ENCODE measurements at regions of chr6 and their contacts with region 1.

Region 1: GRCh38 chr6:32868257-32868788 is 14.3 kb downstream of the PSMB9 start:
- DNase-seq: peak; percentile 83
- H3K4me3 ChIP-seq: no peak overlapping the region
- H3K27ac ChIP-seq: no peak overlapping the region
- H3K4me1 ChIP-seq: no peaks in the 10 kb centered on the region
- H3K27me3 ChIP-seq: peaks cover 33 to 58% of the 10 kb centered on the region in 2 experiments
- CTCF ChIP-seq: peak; percentile 69 to 72
- POLR2A ChIP-seq: no peak

Region 2: DNA sequence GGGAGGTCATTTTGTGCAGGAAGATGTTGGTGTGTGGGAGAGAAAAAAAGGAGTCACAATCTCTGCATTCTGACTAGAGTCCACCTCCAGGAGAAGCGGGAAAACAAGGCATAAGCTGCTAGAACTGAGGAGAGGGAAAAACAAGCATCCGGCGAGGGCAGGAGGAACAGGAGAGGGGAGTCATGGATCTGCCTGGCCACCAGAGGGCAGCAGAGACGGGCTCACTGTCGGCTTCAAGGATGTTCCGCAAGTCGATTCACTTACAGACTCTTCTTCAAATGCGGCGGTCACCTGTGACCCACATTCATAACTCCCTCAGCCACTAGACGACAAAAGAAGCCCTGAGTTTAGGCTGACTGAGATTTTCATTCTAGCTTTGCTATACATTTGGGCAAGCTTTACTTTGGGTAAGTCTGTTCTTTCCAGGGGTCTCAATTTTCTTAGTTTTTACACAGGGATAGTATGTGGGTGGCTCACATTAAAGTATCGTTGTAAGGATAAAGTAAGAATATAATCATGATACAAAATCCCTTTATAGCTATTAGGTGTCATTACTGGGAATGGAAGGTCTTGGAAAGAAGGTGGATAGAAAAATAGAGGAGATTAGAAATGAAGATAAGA is 454.8 kb before region 1 on chr6:
- CTCF ChIA-PET with region 1: interaction called, 51 read pairs
- POLR2A ChIA-PET with region 1: no interaction called
- dilution Hi-C with region 1: no loop called
- intact Hi-C with region 1: loop called (anchors 2 kb)
- DNase-seq: peak; percentile 84
- H3K4me3 ChIP-seq: no peak overlapping the region
- H3K27ac ChIP-seq: no peak overlapping the region
- H3K4me1 ChIP-seq: peaks cover 8% of the 10 kb centered on the region
- H3K27me3 ChIP-seq: peaks cover 15 to 26% of the 10 kb centered on the region in 2 experiments
- CTCF ChIP-seq: peak; percentile 79 to 94
- POLR2A ChIP-seq: no peak

Region 3: DNA sequence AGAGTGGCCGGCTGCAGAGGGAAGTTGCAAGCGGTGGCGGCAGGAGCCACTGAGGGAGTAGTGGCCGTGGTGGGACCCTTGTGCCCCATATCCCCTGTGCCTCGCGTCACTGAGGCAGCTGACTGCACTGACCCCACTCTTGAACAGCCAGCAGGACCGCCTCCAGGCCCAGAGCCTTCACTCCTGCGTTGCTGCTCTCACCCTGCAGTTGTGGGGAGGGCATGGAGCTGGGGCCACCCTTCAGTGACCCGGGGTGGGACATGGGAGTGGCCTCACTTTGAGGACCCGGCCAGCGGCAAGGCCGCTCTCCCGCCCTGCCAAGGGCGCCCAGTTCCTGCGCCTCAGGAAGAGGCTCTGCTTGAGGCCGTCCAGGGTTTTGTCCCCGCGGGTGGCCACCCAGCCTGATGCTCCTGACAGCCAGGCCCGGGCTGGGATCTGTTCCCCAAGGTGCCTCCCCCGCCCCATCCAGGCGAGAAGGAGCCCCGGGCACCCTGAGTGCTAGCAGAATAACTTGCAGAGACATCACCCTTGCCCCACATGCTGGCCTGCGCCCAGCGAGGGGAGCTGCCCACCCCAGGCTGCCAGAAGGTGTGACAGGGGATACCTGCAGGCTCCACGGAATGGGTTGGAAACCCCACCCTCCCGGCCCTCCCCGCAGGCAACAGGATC is 384.2 kb before region 1 on chr6:
- CTCF ChIA-PET with region 1: no interaction called
- POLR2A ChIA-PET with region 1: no interaction called
- dilution Hi-C with region 1: no loop called
- intact Hi-C with region 1: no loop called
- DNase-seq: peak; percentile 1
- H3K4me3 ChIP-seq: no peak overlapping the region
- H3K27ac ChIP-seq: no peak overlapping the region
- H3K4me1 ChIP-seq: no peaks in the 10 kb centered on the region
- H3K27me3 ChIP-seq: peaks cover 3 to 4% of the 10 kb centered on the region in 2 experiments
- CTCF ChIP-seq: no peak
- POLR2A ChIP-seq: no peak

Region 4: GRCh38 chr6:32658268-32658897 is 209.9 kb before region 1 on chr6:
- CTCF ChIA-PET with region 1: no interaction called
- POLR2A ChIA-PET with region 1: no interaction called
- dilution Hi-C with region 1: no loop called
- intact Hi-C with region 1: no loop called
- DNase-seq: no peak
- H3K4me3 ChIP-seq: no peak overlapping the region
- H3K27ac ChIP-seq: no peak overlapping the region
- H3K4me1 ChIP-seq: no peaks in the 10 kb centered on the region
- H3K27me3 ChIP-seq: no peaks in the 10 kb centered on the region
- CTCF ChIP-seq: no peak
- POLR2A ChIP-seq: no peak

Region 5: DNA sequence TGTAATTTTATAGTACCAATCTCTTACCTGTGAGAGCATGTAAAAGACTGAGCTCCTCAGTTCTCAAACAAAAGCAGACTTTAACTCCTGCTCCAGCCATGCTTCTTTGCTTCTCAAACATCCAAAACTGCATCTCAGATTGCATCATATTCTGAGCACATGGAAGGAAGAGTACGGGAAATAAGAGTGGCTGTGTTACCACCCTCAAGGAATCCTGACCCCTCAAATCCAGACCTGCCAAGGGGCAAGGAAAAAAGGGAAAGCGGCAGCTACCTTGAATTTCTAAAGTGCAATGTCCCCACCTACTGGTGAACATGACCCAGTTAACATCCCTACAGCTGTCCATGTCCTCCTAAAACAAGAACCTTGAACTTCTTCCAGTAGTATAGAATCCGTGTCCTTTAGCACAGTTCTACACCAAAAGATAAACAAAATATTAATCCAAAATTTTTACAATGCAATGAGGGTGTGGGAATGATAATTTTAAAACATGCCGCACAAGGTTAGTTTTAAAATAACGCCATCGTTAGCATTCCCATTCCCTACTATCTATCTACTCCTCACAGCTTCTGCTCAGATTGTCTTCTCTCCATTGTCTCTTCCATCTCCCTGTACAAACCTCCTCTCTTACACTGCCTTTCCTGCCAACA is 167.8 kb before region 1 on chr6:
- CTCF ChIA-PET with region 1: interaction called, 28 read pairs
- POLR2A ChIA-PET with region 1: no interaction called
- dilution Hi-C with region 1: no loop called
- intact Hi-C with region 1: loop called (anchors 10 kb)
- DNase-seq: peak; percentile 67
- H3K4me3 ChIP-seq: no peak overlapping the region
- H3K27ac ChIP-seq: no peak overlapping the region
- H3K4me1 ChIP-seq: peaks cover 6% of the 10 kb centered on the region
- H3K27me3 ChIP-seq: peaks cover 15 to 40% of the 10 kb centered on the region in 2 experiments
- CTCF ChIP-seq: peak; percentile 41 to 64
- POLR2A ChIP-seq: no peak

Region 6: DNA sequence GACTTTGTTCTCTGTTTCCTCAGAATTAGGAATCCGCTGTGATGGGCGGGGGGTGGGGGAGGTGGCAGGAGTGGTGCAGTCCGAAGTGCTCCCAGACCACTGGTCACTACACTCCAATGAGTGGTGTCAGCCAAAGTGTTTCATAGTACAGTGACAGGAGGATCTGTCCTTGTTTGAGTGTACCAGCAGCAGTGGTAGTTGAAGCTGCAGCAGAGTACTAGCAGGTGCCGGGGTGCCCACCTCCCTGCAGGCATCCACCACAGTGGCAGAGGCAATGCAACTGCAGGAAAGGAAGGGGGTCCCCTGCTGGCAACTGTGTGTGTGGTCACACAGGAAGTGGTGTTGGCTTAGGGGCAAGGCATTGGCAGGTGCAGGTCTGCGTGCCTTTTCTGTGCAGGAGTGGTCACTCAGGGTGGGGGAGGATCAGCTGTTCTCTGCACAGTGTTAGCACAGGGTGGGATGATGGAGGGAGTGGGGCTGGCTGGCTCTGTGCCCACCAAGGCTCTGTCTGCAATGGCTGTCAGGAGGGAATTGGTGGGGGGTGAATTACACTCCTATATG is 61.2 kb before region 1 on chr6:
- CTCF ChIA-PET with region 1: interaction called, 63 read pairs
- POLR2A ChIA-PET with region 1: no interaction called
- dilution Hi-C with region 1: no loop called
- intact Hi-C with region 1: no loop called
- DNase-seq: no peak
- H3K4me3 ChIP-seq: no peak overlapping the region
- H3K27ac ChIP-seq: no peak overlapping the region
- H3K4me1 ChIP-seq: no peaks in the 10 kb centered on the region
- H3K27me3 ChIP-seq: peaks cover 13 to 35% of the 10 kb centered on the region in 2 experiments
- CTCF ChIP-seq: no peak
- POLR2A ChIP-seq: no peak

Region 7: DNA sequence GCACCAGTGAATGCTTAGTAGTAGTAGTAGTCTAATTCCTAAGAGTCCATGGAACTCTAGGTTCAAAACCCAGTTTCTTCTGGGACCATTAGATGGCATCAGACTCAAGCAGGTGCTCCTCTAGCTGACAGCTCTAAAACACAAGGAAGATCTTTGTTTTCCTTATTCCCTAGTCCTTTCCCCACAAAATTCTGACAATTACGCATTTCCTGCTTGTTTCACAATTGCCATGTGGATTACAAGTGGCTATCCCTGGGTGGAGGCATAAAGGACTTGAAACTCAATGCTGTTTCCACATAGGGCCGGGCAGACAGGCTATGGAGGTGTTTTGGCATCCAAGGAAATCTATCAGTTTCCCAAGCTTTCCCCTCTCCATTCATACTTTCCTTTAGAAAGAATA is 42.4 kb before region 1 on chr6:
- CTCF ChIA-PET with region 1: interaction called, 188 read pairs
- POLR2A ChIA-PET with region 1: no interaction called
- dilution Hi-C with region 1: no loop called
- intact Hi-C with region 1: loop called (anchors 1 kb)
- DNase-seq: peak; percentile 48
- H3K4me3 ChIP-seq: no peak overlapping the region
- H3K27ac ChIP-seq: no peak overlapping the region
- H3K4me1 ChIP-seq: no peaks in the 10 kb centered on the region
- H3K27me3 ChIP-seq: no peaks in the 10 kb centered on the region
- CTCF ChIP-seq: peak; percentile 13 to 20
- POLR2A ChIP-seq: no peak

Region 8: DNA sequence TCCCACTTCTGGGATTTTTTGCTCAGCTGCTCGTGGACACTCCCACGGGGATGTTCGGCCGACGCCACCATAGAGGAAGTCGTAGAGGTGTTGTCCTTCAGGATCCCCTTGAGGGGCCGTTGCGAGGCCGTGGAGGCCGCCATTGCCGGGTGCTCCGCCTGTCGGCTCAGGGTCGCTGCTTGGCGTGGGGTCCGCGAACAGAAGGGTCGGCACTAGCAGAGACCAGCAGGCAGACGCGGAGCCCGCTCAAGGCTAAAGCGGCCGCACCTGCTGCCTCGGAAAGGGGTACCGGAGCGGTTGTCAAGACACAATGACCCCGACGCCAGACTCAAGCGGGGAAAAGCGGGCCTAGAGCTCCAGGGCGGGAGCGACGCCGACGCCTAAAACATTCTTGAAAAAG is 11.4 kb after region 1 on chr6:
- CTCF ChIA-PET with region 1: interaction called, 40 read pairs
- POLR2A ChIA-PET with region 1: no interaction called
- dilution Hi-C with region 1: no loop called
- intact Hi-C with region 1: no loop called
- DNase-seq: no peak
- H3K4me3 ChIP-seq: no peak overlapping the region
- H3K27ac ChIP-seq: no peak overlapping the region
- H3K4me1 ChIP-seq: no peaks in the 10 kb centered on the region
- H3K27me3 ChIP-seq: peaks cover 43 to 68% of the 10 kb centered on the region in 2 experiments
- CTCF ChIP-seq: no peak
- POLR2A ChIP-seq: no peak

Region 9: DNA sequence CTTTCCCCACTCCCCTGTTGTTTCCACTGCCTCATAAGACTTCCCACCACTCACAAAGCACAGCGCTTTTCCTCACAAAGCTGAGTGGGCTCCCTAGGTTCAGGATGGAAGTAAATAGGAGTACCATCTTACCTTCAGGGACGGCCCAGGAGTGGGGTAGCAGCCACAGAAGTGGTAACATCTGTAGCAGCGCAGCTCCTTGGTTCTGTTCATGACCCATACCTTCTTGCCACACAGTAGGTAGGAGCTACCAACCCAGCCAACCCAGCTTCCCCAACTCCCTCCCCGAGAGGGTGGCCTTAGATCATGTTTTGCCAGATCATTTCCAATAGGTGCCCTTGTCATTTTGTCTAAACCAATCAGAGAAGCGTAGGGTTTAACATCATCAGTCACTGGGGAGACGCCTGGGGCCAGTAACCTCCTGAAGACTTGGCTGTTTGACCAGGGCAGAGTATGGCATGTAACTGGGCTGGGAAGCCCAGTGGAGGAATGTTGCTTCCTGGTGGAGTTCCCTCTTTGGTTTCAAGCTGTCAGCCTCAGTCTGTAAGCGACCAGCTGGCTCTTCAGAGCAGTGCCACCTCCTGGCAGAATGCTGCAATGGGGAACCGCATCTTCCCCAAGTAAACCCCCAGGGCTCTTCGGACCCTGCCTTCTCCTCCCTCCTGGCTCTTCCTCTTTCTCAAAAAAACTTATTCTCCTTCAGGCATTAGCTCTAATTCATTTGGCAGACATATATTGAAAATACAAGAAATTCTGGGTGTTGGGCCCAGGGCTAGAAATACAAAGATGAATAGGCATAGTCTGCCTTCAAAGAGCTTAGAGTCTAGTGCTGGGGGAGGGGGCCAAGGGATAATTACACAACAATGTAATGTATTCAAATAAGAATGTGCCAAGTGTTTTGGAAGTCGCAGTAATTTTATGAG is 84.8 kb after region 1 on chr6 and contains the start of gene HLA-DMA:
- CTCF ChIA-PET with region 1: interaction called, 12 read pairs
- POLR2A ChIA-PET with region 1: no interaction called
- dilution Hi-C with region 1: no loop called
- intact Hi-C with region 1: no loop called
- DNase-seq: peak; percentile 96
- H3K4me3 ChIP-seq: no peak within 1 kb of the TSS
- H3K27ac ChIP-seq: no peak within 1 kb of the TSS
- H3K4me1 ChIP-seq: no peaks in the 10 kb centered on the region
- H3K27me3 ChIP-seq: no peaks in the 10 kb centered on the region
- CTCF ChIP-seq: peak; percentile 80 to 81
- POLR2A ChIP-seq: no peak
- total RNA-seq, gene HLA-DMA: 0.53 and 1.2 TPM in 2 replicates

Measured in endothelial cell of umbilical vein (primary cell).